ENCODE measurements at regions of chr21 and their contacts with region 1.

Region 1: DNA sequence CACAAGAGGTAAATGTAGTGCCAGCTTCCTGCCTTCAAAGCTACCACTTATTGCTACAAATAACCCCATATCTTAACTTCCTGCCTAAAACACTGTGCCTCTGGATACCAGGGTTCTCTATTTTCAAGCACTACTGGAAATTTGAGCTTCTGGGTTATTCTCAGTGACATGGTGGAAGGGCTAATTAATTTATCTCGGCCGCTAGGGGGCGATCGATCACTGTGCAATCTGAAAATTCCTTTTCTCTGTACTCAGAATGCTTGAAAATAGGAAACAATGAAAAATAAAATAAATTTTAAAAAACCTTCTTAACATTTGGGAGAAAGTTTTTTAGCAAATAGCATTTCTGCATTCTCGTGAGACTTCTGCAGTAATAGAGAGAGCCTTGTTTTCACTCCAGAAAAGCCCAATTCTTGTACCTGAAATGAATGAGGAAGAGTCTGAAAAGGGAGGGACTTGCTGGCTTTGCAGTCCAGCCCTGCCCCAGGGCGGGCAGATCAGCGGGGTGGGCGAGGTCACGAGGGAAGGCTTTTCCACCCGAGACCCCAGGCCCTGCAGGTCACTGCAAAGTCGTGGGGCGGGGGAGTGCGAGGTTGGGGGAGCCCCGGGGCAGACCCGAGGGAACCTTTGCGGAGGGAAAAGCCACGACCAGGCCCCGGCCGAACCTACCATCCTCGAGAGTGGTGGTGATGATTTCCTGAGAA is 276.7 kb downstream of the PCP4 start:
- DNase-seq: no peak
- ATAC-seq: no peak
- H3K4me3 Mint-ChIP-seq: no peak overlapping the region
- H3K27ac Mint-ChIP-seq: no peak overlapping the region
- H3K4me1 Mint-ChIP-seq: no peaks in the 10 kb centered on the region
- H3K27me3 Mint-ChIP-seq: no peaks in the 10 kb centered on the region
- CTCF ChIP-seq: no peak

Region 2: DNA sequence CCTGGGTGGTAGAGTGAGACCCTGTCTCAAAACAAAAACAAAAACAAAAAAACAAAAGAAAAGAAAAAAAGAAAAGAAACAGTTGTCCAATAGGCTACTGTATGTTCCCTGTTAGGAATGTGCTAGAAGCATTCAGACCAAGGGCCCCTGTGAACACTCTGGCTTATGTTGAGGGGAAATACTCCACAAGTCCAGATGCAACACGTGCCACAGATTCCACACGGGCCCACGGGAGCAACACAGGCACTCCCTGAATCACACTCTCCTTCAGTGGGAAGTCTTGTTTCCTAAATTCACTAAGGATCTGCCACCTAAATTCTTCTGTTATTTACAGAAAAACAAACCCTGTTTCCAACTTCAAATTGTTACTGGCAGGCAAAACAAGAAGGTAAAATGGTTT is 14.4 kb after region 1 on chr21:
- CTCF ChIA-PET with region 1: no interaction called
- POLR2A ChIA-PET with region 1: no interaction called
- intact Hi-C with region 1: no loop called
- DNase-seq: no peak
- ATAC-seq: no peak
- H3K4me3 Mint-ChIP-seq: no peak overlapping the region
- H3K27ac Mint-ChIP-seq: no peak overlapping the region
- H3K4me1 Mint-ChIP-seq: no peaks in the 10 kb centered on the region
- H3K27me3 Mint-ChIP-seq: no peaks in the 10 kb centered on the region
- CTCF ChIP-seq: no peak

Region 3: DNA sequence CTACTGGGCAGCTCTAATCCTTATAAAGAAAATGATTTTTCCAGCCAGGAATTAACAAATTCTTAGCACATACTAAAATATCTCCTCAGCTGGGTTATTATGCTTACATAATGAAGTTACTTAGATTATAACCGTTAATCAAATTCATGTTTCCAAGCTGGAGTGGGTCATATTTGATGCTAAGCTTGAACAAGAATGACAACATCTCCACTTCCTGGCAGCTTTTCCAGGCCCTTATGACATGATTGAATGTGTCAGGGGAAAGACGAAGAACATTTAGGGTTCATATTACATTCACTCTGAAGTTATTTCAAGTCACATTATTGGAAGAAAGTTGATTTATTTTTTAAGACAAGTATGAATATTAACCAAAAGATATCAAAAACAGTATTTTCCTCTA is 57.0 kb after region 1 on chr21:
- CTCF ChIA-PET with region 1: no interaction called
- POLR2A ChIA-PET with region 1: no interaction called
- intact Hi-C with region 1: no loop called
- DNase-seq: no peak
- ATAC-seq: no peak
- H3K4me3 Mint-ChIP-seq: no peak overlapping the region
- H3K27ac Mint-ChIP-seq: no peak overlapping the region
- H3K4me1 Mint-ChIP-seq: no peaks in the 10 kb centered on the region
- H3K27me3 Mint-ChIP-seq: no peaks in the 10 kb centered on the region
- CTCF ChIP-seq: no peak

Region 4: DNA sequence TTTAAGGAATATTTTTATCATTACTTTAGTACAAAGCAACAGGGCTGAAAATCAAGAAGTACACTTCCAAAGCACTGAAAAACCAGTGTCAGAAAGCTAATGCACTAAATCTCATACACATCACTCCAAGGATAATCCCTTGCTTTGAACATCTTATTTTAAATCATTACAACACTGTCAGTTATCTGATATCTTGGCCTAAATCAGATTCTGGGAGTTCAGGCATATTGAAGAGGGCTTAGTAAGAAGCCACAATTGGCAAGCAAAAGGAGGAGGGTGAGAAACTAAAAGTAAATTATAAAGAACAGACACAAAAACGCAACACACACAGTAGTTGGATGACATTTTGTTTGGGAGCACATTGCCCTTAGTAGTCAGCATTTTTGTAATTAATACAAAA is 171.7 kb after region 1 on chr21:
- CTCF ChIA-PET with region 1: no interaction called
- POLR2A ChIA-PET with region 1: no interaction called
- intact Hi-C with region 1: no loop called
- DNase-seq: no peak
- ATAC-seq: no peak
- H3K4me3 Mint-ChIP-seq: no peak overlapping the region
- H3K27ac Mint-ChIP-seq: no peak overlapping the region
- H3K4me1 Mint-ChIP-seq: no peaks in the 10 kb centered on the region
- H3K27me3 Mint-ChIP-seq: no peaks in the 10 kb centered on the region
- CTCF ChIP-seq: no peak

Region 5: GRCh38 chr21:40445283-40445803 is 301.4 kb after region 1 on chr21:
- CTCF ChIA-PET with region 1: no interaction called
- POLR2A ChIA-PET with region 1: no interaction called
- intact Hi-C with region 1: no loop called
- DNase-seq: no peak
- ATAC-seq: no peak
- H3K4me3 Mint-ChIP-seq: no peak overlapping the region
- H3K27ac Mint-ChIP-seq: no peak overlapping the region
- H3K4me1 Mint-ChIP-seq: no peaks in the 10 kb centered on the region
- H3K27me3 Mint-ChIP-seq: no peaks in the 10 kb centered on the region
- CTCF ChIP-seq: no peak

Region 6: DNA sequence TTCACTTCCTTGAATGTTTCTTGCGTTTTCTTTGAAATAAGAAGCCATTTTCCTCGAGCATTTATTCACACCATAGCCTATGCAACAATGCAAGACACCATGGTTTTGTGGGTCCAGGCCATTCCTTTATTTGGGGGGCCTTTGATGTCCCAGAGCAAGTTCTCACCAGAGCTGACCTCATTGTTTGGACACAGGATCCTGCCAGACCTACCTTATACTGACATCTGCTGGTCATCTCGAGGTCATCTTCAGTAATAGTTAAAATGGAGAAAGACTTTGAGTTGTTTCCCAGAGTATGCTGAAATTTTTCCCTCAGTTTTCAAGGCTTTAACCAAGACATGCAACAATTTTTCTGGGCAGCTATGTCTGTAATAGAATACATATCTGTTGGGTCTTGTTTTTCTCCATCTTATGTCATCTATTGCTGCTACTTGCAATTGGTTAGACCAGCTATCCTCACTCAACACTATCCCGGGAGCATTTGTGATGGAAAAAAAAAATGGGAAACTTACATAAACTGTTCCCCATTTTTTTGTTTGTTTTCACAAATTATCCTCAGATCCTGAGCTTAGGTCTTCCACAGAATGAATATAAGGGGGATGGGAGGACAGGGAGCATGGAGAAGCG is 990.0 kb after region 1 on chr21:
- CTCF ChIA-PET with region 1: no interaction called
- POLR2A ChIA-PET with region 1: no interaction called
- intact Hi-C with region 1: loop called (anchors 5 kb)
- DNase-seq: no peak
- ATAC-seq: no peak
- H3K4me3 Mint-ChIP-seq: no peak overlapping the region
- H3K27ac Mint-ChIP-seq: no peak overlapping the region
- H3K4me1 Mint-ChIP-seq: peaks cover 2% of the 10 kb centered on the region
- H3K27me3 Mint-ChIP-seq: peaks cover 25% of the 10 kb centered on the region
- CTCF ChIP-seq: no peak